Activated T-helper 1 cell treated with anti-CD3 and anti-CD28 coated beads, Interleukin-12 subunit alpha, Interleukin-12 subunit beta, Interleukin-2, Interleukin-4 antibody, amounts not matched to agents 30 ng/mL and 10 ng/mL and 1 ng/mL, durations not matched to agents 14 hours and 24 hours and 36 hours (primary cell): ENCODE measurements at regions of chr15 and their contacts with region 1.

Region 1: DNA sequence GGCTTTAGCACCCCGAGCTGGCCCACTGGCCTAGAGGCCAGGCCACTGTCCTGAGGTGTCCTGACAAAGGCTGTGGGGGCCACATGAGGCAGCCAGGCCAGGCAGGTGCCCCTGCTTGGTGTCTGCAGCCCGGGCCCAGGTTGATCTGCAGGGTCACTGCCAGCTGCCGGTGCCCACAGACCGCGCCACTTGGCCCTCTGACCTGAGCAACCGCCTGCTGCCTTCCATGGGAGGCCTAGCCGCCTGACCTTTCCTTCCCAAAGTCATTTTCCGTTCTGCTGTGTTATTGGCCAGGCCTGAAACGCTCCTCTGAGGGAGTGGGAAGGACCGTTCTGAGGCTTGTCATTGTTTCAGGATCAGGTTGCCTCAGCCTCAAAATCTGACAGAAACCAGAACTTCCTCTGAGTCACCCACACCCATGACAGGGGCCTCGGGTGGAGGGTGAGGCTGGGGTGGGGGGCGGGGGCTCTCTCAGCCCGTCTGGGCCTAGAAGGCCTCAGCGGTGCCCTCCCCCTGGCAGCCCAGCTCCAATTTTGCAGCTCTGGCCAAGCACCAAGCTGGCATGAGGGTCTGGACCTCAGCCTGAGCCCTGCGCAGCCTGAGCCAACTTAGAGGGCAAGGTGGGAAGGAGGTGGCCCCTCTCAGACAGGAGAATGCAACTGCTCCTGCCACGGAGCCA is 140.7 kb upstream of the MEF2A start:
- DNase-seq: peak; percentile 49
- H3K4me3 Mint-ChIP-seq: peak overlapping the region; percentile 68
- H3K27ac Mint-ChIP-seq: peak overlapping the region; percentile 92
- H3K4me1 Mint-ChIP-seq: peaks cover 63% of the 10 kb centered on the region
- H3K27me3 Mint-ChIP-seq: no peaks in the 10 kb centered on the region

Region 2: GRCh38 chr15:99275525-99276128 is 149.5 kb before region 1 on chr15:
- intact Hi-C with region 1: loop called (anchors 2 kb)
- DNase-seq: no peak
- H3K4me3 Mint-ChIP-seq: no peak overlapping the region
- H3K27ac Mint-ChIP-seq: no peak overlapping the region
- H3K4me1 Mint-ChIP-seq: peaks cover 34% of the 10 kb centered on the region
- H3K27me3 Mint-ChIP-seq: no peaks in the 10 kb centered on the region

Region 3: GRCh38 chr15:99442252-99442897 is 17.3 kb after region 1 on chr15:
- intact Hi-C with region 1: loop called (anchors 1 kb)
- DNase-seq: no peak
- H3K4me3 Mint-ChIP-seq: no peak overlapping the region
- H3K27ac Mint-ChIP-seq: peak overlapping the region; percentile 74
- H3K4me1 Mint-ChIP-seq: peaks cover 42% of the 10 kb centered on the region
- H3K27me3 Mint-ChIP-seq: peaks cover 15% of the 10 kb centered on the region